HCT116 (cell line): ENCODE measurements at regions of chr15 and their contacts with region 1.

Region 1: DNA sequence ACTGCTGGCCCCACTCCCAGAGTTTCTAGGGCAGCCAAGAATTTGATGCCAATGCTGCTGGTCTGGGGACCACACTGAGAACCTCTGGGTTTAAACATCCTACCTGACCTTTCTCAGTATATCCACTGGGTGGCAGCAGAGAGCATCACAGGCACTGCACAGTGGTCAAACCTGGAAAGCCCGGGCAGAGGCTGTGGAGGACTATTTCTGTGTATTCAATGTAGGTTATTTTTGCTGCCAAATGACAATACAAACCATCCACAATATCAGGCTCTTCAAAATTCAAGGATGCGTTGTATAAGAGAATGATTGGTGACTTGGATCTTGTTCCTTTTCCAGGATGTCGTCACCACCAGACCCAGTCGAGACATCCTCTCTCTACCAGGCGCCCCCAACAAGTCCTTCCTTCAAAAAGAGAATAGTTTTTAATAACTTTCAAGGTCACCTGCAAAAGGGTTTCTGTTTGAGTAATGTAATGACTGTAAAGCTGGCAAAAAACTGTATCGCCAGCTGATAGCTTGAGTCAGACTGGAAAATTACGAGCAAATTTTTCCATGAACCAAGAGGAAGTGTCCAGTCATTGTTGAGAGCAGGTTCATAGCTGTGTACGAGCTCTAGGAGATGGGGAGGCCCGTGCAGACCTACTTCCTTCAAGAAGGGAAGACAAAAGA is 30.5 kb upstream of the MYZAP start:
- DNase-seq: peak; percentile 55
- ATAC-seq: peak; percentile 92
- H3K4me3 ChIP-seq: no peak overlapping the region
- H3K27ac ChIP-seq: no peak overlapping the region
- H3K4me1 ChIP-seq: peaks cover 0 to 17% of the 10 kb centered on the region in 2 experiments; a peak in 2 of 4 replicates
- H3K27me3 ChIP-seq: no peaks in the 10 kb centered on the region
- CTCF ChIP-seq: peak; percentile 86 to 91 (median 86)
- POLR2A ChIP-seq: no peak
- RAD21 ChIP-seq: peak; percentile 89

Region 2: DNA sequence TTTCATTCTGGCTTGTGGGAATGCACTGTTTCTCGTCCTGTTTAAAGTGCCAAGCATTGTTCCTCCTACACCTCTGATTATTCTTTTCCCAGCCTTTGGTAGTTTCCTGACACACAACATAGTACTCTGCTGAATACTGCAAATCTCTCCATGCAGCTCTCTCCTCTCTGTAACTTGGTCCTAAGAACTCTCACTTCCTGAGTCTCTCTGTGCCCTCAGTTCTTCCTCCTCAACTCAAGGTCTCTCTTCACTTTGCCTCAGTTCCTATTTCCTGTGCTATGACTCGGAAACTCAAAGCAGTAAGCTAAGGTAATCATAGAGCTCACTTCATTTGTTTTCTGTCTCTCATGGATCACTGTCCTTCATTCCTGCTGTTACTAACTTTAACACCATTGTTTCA is 941.3 kb before region 1 on chr15:
- CTCF ChIA-PET with region 1: no interaction called
- POLR2A ChIA-PET with region 1: no interaction called
- RAD21 ChIA-PET with region 1: no interaction called
- intact Hi-C with region 1: no loop called
- DNase-seq: no peak
- ATAC-seq: no peak
- H3K4me3 ChIP-seq: no peak overlapping the region
- H3K27ac ChIP-seq: no peak overlapping the region
- H3K4me1 ChIP-seq: no peaks in the 10 kb centered on the region
- H3K27me3 ChIP-seq: no peaks in the 10 kb centered on the region
- CTCF ChIP-seq: no peak
- POLR2A ChIP-seq: no peak
- RAD21 ChIP-seq: no peak

Region 3: DNA sequence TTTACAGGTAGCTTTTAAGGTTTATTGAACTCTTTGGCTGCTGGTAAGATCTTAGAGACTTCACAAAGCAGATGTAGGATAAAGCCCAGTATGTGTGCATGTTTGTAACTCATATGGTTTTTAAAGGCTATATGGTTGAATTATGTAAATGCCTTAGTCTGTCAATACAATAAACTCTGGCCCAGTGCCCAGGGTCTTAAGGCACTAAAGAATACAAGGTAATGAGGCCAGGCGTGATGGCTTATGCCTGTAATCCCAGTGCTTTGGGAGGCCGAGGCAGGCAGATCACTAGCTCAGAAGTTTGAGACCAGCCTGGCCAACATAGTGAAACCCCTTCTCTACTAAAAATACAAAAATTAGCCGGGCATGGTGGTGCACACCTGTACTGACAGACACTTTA is 355.2 kb before region 1 on chr15:
- CTCF ChIA-PET with region 1: no interaction called
- POLR2A ChIA-PET with region 1: no interaction called
- RAD21 ChIA-PET with region 1: no interaction called
- intact Hi-C with region 1: no loop called
- DNase-seq: no peak
- ATAC-seq: no peak
- H3K4me3 ChIP-seq: no peak overlapping the region
- H3K27ac ChIP-seq: no peak overlapping the region
- H3K4me1 ChIP-seq: no peaks in the 10 kb centered on the region
- H3K27me3 ChIP-seq: no peaks in the 10 kb centered on the region
- CTCF ChIP-seq: no peak
- POLR2A ChIP-seq: no peak
- RAD21 ChIP-seq: no peak

Region 4: DNA sequence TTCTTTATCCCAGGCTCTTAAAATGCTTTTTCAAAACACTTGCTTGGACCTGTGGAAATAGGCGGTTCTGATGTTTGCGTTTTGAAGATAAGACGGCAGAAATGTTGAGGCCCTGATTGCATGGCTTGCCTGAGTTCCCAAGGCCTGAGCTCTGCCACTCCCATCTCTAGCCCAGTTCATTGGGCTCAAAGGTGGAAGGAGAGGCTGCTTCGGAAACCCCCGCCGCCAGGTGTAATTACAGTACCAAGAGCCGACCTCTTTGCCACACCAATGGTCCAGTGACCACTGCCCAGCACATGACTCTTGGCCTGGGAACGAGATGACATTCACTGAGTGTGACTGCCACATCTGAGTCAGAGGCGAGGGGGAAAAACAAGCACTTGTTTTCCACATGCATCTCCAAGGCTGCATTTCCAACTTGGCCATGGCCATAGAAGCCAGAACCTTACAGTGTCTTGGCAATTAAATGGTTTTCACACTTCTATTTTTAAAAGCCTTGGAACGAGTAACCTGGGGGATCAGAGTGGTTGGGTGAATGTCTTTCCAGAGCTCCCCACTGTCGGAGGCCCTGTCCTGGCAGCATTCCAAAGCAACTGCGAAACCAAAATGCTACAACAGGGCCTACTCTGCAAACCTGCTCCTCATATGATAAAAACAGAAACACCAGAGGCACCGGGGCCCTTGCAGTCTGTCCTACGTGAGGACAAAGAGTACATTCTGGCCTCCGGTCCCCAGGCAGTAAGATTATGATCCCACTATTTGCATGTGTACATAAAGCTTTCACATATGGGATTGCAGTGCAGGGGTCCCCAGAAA is 248.7 kb before region 1 on chr15:
- CTCF ChIA-PET with region 1: no interaction called
- POLR2A ChIA-PET with region 1: no interaction called
- RAD21 ChIA-PET with region 1: no interaction called
- intact Hi-C with region 1: no loop called
- DNase-seq: no peak
- ATAC-seq: no peak
- H3K4me3 ChIP-seq: no peak overlapping the region
- H3K27ac ChIP-seq: no peak overlapping the region
- H3K4me1 ChIP-seq: no peaks in the 10 kb centered on the region
- H3K27me3 ChIP-seq: no peaks in the 10 kb centered on the region
- CTCF ChIP-seq: no peak
- POLR2A ChIP-seq: no peak
- RAD21 ChIP-seq: no peak

Region 5: DNA sequence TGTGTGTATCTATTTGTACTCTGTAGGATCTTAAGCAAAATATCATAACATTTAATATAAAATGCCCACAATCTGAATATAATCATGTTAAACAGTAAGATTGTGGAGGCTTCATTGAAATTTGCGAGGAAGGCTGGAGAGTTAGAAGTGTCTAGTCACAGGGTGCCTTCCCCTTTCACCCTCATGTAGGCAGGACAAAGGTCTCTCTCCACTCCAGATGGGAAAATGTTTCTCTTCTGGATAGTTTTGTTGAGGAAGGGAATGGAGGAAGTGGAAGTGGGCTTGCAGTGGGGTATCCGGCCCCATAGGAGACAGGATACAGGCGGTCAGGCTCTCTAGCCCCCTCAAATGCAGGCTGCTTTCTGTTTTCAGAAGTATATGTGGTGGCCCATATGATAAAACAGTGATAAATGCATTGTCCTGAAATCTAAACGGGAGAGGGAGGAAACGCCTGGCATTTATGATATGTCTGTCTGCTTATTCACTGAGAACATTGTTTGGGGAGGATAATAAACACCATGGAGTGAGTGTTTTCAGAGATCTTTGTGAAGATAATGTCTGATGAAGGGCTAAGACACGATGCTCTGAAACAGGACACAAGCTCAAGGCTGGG is 17.2 kb after region 1 on chr15:
- CTCF ChIA-PET with region 1: no interaction called
- POLR2A ChIA-PET with region 1: no interaction called
- RAD21 ChIA-PET with region 1: no interaction called
- intact Hi-C with region 1: no loop called
- DNase-seq: no peak
- ATAC-seq: no peak
- H3K4me3 ChIP-seq: no peak overlapping the region
- H3K27ac ChIP-seq: no peak overlapping the region
- H3K4me1 ChIP-seq: no peaks in the 10 kb centered on the region
- H3K27me3 ChIP-seq: no peaks in the 10 kb centered on the region
- CTCF ChIP-seq: no peak
- POLR2A ChIP-seq: no peak
- RAD21 ChIP-seq: no peak

Region 6: DNA sequence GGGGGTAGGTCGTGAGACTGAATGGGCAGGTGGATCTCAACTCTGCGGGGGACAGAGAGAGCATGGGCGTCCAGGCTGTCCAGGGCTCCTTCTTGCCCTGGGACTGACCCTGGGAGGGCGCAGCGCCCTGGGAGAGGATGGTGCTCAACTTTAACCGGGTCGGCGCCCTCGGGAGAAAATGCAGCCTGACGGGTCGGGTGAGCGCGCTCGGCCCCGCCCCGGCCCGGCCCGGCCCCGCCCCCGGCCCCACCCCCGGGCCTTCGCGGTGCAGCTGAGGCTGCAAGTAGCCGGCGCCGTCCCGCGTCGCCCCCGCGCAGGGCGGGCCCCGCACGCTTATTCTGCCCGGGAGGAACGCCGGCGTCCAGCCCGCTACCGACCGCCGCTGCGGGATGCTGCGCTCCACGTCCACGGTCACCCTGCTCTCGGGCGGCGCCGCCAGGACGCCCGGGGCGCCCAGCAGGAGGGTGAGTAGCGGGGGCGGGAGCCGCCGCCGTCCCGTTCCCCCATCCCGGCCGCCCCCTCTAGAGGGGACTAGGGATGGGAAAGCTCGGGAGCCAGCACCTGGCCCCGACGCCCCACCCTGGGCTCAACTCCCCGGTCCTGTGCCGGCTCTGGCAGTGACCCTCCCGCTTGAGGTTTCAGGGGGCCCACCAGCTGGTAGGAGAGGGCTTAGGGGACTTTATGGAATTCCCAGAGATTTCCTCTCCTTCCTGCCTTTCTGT is 30.6 kb after region 1 on chr15 and contains the start of gene MYZAP:
- CTCF ChIA-PET with region 1: no interaction called
- POLR2A ChIA-PET with region 1: no interaction called
- RAD21 ChIA-PET with region 1: no interaction called
- intact Hi-C with region 1: loop called (anchors 2 kb)
- DNase-seq: no peak
- ATAC-seq: peak; percentile 96
- H3K4me3 ChIP-seq: peak within 1 kb of the TSS; percentile 46 to 63
- H3K27ac ChIP-seq: peak within 1 kb of the TSS; percentile 45; the same call in 1 of the 2 replicates
- H3K4me1 ChIP-seq: peaks cover 10 to 23% of the 10 kb centered on the region in 2 experiments; a peak in 3 of 4 replicates
- H3K27me3 ChIP-seq: no peaks in the 10 kb centered on the region
- CTCF ChIP-seq: 0 out of 6 replicates have a peak, but pooled peaks of 1 of the 3 experiments have one; percentile 4
- POLR2A ChIP-seq: no peak
- RAD21 ChIP-seq: no peak
- total RNA-seq, gene MYZAP: 5.8 TPM

Region 7: GRCh38 chr15:57611938-57612337 is 50.8 kb after region 1 on chr15:
- CTCF ChIA-PET with region 1: interaction called, 32 read pairs
- POLR2A ChIA-PET with region 1: no interaction called
- RAD21 ChIA-PET with region 1: interaction called in 1 of 2 experiments, 4 read pairs
- intact Hi-C with region 1: loop called (anchors 1 kb)
- DNase-seq: peak; percentile 34
- ATAC-seq: peak; percentile 40
- H3K4me3 ChIP-seq: no peak overlapping the region
- H3K27ac ChIP-seq: peak overlapping the region; percentile 23; the same call in 1 of the 2 replicates
- H3K4me1 ChIP-seq: peaks cover 36 to 55% of the 10 kb centered on the region in 2 experiments
- H3K27me3 ChIP-seq: no peaks in the 10 kb centered on the region
- CTCF ChIP-seq: peak; percentile 40 to 91 (median 52)
- POLR2A ChIP-seq: no peak
- RAD21 ChIP-seq: peak; percentile 95

Region 8: GRCh38 chr15:57655809-57656208 is 94.6 kb after region 1 on chr15:
- CTCF ChIA-PET with region 1: interaction called, 3 read pairs
- POLR2A ChIA-PET with region 1: no interaction called
- RAD21 ChIA-PET with region 1: no interaction called
- intact Hi-C with region 1: loop called (anchors 5 kb)
- DNase-seq: no peak
- ATAC-seq: no peak
- H3K4me3 ChIP-seq: no peak overlapping the region
- H3K27ac ChIP-seq: no peak overlapping the region
- H3K4me1 ChIP-seq: no peaks in the 10 kb centered on the region
- H3K27me3 ChIP-seq: no peaks in the 10 kb centered on the region
- CTCF ChIP-seq: peak in 2 of 3 experiments; percentile 16 to 20; a peak in 1 of 6 replicates
- POLR2A ChIP-seq: no peak
- RAD21 ChIP-seq: peak; percentile 33; the same call in 1 of the 2 replicates

Region 9: DNA sequence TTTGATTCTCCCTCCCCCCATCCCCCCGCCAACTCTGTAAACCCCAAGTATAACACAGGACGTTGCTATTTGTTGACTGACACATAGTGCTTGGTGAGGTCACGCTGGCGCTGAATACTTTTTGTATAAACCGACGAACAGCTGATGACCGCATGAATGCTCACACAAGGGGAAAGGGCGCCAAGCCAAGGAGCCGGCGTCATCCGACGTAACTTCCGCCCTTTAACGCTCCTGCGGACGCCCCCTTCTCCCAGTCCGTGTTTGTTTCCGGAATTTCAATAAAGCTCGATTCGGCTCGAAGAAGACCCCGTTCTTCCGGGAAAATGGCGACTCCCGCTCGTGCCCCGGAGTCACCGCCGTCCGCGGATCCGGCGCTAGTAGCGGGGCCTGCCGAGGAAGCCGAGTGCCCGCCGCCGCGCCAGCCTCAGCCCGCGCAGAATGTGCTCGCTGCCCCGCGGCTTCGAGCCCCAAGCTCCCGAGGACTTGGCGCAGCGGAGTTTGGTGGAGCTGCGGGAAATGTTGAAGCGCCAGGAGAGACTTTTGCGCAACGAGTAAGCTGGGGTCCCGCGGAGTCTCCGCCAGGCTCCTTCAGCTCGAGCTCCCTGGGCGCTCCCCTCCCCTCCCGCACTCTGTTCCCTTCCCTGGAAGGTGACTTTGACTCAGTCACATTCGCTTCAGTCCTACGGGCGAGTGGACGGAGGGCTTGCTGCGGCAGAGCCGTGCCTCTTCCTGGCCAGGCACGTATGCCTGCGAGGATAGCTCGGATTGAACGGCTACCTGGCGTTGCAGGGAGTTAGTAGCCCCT is 145.4 kb after region 1 on chr15 and contains the start of gene POLR2M:
- CTCF ChIA-PET with region 1: interaction called, 4 read pairs
- POLR2A ChIA-PET with region 1: no interaction called
- RAD21 ChIA-PET with region 1: no interaction called
- intact Hi-C with region 1: loop called (anchors 2 kb)
- DNase-seq: peak; percentile 93
- ATAC-seq: peak; percentile 94
- H3K4me3 ChIP-seq: peak within 1 kb of the TSS; percentile 96 to 97
- H3K27ac ChIP-seq: peak within 1 kb of the TSS; percentile 71
- H3K4me1 ChIP-seq: peaks cover 5 to 16% of the 10 kb centered on the region in 2 experiments; a peak in 3 of 4 replicates
- H3K27me3 ChIP-seq: no peaks in the 10 kb centered on the region
- CTCF ChIP-seq: no peak
- POLR2A ChIP-seq: no peak
- RAD21 ChIP-seq: no peak
- total RNA-seq, gene POLR2M: 86.2 TPM

Region 10: DNA sequence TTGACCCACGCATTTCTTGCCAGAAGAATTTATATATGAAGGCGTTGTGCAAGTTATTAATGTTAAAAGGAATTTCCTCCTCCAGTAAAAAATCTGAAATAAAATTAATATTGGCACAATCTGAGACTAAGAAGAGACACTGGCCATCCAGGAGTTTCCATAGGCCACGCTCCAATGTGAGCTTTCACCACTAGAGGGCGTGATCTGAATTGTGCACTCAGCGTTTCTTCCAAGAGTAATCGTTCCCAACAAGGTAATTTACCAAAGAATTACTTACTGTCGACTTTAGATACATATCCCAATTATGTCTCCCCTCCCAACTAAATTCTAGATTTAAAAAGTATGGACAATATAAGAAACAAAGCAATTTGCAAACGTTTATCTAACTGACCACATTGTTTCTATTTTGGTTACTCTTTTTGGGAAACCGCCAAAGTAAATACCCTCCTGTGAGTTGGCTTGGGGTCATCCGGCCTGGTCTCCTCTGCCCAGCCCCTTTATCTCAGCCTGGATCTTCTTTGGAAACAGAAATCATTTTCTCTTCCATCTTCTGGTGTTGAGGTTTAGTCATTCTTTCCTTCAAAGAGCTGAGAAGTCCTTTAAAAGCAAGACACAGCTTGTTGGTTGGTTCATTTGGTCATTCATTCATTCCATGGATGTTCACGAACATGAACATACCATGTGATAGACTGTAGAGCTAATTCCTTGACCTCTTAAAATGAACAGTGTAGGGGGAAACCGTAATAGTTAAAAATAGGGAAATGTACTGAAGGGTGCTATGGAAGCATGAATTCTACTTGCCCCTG is 171.6 kb after region 1 on chr15:
- CTCF ChIA-PET with region 1: interaction called, 3 read pairs
- POLR2A ChIA-PET with region 1: no interaction called
- RAD21 ChIA-PET with region 1: no interaction called
- intact Hi-C with region 1: loop called (anchors 1 kb)
- DNase-seq: peak; percentile 48
- ATAC-seq: peak; percentile 91
- H3K4me3 ChIP-seq: no peak overlapping the region
- H3K27ac ChIP-seq: no peak overlapping the region
- H3K4me1 ChIP-seq: peaks cover 4% of the 10 kb centered on the region in 2 experiments; a peak in 3 of 4 replicates
- H3K27me3 ChIP-seq: no peaks in the 10 kb centered on the region
- CTCF ChIP-seq: peak; percentile 47 to 97 (median 89); a peak in 5 of 6 replicates
- POLR2A ChIP-seq: no peak
- RAD21 ChIP-seq: peak; percentile 46; the same call in 1 of the 2 replicates

Region 11: DNA sequence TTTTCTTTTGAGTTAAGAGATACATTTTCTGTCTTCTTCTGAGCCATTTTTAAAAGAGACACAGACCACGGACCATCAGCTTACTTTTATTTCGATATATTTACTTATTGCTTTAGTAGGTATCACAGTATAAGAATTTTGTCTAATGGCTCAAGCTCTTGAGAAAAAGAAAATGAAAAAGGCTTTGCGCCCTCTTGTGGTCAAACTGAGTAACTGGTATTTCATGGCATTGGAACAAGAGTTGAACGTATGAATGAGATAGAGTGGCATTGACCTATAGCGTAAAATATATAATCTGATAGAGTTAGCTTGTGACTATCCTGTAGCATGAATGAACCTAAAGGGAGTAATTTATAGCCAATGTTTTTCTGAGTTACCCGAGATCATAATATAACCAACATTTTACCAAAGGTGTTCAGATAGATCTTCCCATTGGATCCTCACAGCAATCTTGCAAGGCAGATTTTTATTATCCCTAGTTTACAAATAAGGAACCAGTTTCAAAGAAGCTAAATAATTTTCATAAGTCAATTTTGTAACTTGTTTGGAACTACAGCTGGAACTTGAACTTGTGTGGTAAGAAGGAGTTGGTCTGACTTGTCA is 300.0 kb after region 1 on chr15:
- CTCF ChIA-PET with region 1: interaction called, 11 read pairs
- POLR2A ChIA-PET with region 1: no interaction called
- RAD21 ChIA-PET with region 1: no interaction called
- intact Hi-C with region 1: loop called (anchors 1 kb)
- DNase-seq: peak; percentile 60
- ATAC-seq: peak; percentile 82
- H3K4me3 ChIP-seq: no peak overlapping the region
- H3K27ac ChIP-seq: no peak overlapping the region
- H3K4me1 ChIP-seq: no peaks in the 10 kb centered on the region
- H3K27me3 ChIP-seq: no peaks in the 10 kb centered on the region
- CTCF ChIP-seq: peak; percentile 62 to 86 (median 65); a peak in 5 of 6 replicates
- POLR2A ChIP-seq: no peak
- RAD21 ChIP-seq: peak; percentile 73